ENCODE measurements at regions of chr6 and their contacts with region 1.

Region 1: DNA sequence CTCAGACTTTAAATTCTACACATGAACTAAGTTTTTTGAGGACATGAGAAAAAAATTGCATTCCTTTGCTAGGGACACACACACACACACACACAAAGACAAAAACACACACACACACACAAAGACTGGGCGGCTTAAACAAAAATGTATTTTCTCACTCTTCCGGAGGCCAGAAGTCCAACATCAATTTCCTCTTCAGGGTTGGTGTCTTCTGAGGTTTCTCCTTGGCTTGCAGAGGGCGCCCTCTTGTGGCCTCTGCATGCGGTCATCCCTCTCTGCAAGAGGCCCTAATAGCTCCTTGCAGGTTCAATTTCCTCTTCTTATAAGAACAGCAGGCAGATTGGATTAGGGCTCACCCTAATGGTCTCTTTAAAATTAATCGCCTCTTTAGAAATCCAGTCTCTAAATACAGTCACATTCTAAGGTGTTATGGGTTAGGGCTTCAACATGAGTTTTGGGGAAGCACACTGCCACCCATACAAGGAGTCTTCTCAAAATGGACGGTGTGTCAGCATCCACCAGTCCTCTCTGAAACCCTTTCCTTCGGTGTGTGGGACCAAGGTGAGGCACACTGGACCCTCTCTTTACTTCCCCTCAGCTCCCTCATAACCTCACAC is 61.4 kb downstream of the GPR6 start:
- DNase-seq: peak; percentile 74
- H3K27ac ChIP-seq: 0 out of 2 replicates have a peak overlapping the region, but pooled peaks have one; percentile 13
- CTCF ChIP-seq: peak; percentile 91

Region 2: DNA sequence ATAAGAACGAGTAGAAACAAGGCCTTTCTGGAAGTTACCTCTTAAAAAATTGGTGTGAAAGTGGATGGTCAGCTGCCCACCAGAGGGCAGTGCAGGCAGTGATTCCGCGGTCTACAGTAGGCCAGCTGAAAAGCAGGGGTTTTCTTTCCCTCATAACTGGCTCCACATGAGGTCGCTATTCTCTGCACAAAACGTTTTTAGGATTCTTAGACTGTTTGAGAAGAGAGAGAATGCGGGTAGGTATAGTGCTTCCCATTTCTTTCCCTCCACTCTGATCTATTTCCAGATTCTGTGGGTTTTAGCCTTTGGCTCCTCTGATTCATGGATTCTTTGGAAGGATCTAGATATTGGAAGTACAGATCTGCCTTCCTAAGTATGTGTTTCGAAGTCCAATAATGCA is 334.2 kb before region 1 on chr6:
- CTCF ChIA-PET with region 1: interaction called, 43 read pairs
- POLR2A ChIA-PET with region 1: no interaction called
- DNase-seq: peak; percentile 68
- H3K27ac ChIP-seq: no peak overlapping the region
- CTCF ChIP-seq: peak; percentile 95

Region 3: DNA sequence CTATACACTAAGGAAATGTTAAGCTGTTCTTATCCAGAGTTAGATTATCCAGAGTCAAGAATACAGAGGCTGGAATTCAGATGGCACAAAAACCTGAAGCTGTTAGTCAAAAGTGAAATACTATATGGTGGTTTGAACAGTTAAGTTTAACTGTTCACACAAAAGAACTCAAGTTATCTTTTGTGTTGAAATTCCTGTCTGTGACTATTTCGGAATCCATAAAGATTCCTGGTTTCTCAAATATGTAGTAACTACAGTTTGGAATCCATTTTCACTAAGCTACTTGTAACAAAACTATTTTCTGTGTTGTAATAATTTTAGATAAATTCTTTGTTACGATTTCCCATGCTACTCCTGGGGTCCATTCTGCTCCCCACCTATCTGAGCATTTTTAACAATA is 323.9 kb before region 1 on chr6:
- CTCF ChIA-PET with region 1: interaction called, 12 read pairs
- POLR2A ChIA-PET with region 1: no interaction called
- DNase-seq: no peak
- H3K27ac ChIP-seq: no peak overlapping the region
- CTCF ChIP-seq: no peak

Region 4: GRCh38 chr6:109892436-109893435 is 146.7 kb before region 1 on chr6:
- CTCF ChIA-PET with region 1: interaction called, 19 read pairs
- POLR2A ChIA-PET with region 1: no interaction called
- DNase-seq: peak; percentile 79
- H3K27ac ChIP-seq: no peak overlapping the region
- CTCF ChIP-seq: no peak

Region 5: GRCh38 chr6:110053395-110054240 is 14.1 kb after region 1 on chr6:
- CTCF ChIA-PET with region 1: interaction called, 14 read pairs
- POLR2A ChIA-PET with region 1: no interaction called
- DNase-seq: peak; percentile 59
- H3K27ac ChIP-seq: no peak overlapping the region
- CTCF ChIP-seq: peak; percentile 78

Region 6: GRCh38 chr6:110389689-110390382 is 350.4 kb after region 1 on chr6:
- CTCF ChIA-PET with region 1: interaction called, 20 read pairs
- POLR2A ChIA-PET with region 1: no interaction called
- DNase-seq: no peak
- H3K27ac ChIP-seq: no peak overlapping the region
- CTCF ChIP-seq: no peak

Measured in RWPE1 (cell line).